ENCODE measurements at regions of chr14 and their contacts with region 1.

Region 1: GRCh38 chr14:89416002-89416995 is 734 bp downstream of the FOXN3 start:
- DNase-seq: peak; percentile 97 to 100 (median 99)
- ATAC-seq: peak; percentile 71
- H3K4me3 ChIP-seq: peak overlapping the region; percentile 85 to 92
- H3K4me3 Mint-ChIP-seq: peak overlapping the region; percentile 94
- H3K27ac ChIP-seq: peak overlapping the region; percentile 75 to 77
- H3K27ac Mint-ChIP-seq: peak overlapping the region; percentile 93
- H3K4me1 ChIP-seq: peaks cover 30% of the 10 kb centered on the region
- H3K4me1 Mint-ChIP-seq: peaks cover 57% of the 10 kb centered on the region
- H3K27me3 ChIP-seq: no peaks in the 10 kb centered on the region
- H3K27me3 Mint-ChIP-seq: no peaks in the 10 kb centered on the region
- CTCF ChIP-seq: no peak

Region 2: DNA sequence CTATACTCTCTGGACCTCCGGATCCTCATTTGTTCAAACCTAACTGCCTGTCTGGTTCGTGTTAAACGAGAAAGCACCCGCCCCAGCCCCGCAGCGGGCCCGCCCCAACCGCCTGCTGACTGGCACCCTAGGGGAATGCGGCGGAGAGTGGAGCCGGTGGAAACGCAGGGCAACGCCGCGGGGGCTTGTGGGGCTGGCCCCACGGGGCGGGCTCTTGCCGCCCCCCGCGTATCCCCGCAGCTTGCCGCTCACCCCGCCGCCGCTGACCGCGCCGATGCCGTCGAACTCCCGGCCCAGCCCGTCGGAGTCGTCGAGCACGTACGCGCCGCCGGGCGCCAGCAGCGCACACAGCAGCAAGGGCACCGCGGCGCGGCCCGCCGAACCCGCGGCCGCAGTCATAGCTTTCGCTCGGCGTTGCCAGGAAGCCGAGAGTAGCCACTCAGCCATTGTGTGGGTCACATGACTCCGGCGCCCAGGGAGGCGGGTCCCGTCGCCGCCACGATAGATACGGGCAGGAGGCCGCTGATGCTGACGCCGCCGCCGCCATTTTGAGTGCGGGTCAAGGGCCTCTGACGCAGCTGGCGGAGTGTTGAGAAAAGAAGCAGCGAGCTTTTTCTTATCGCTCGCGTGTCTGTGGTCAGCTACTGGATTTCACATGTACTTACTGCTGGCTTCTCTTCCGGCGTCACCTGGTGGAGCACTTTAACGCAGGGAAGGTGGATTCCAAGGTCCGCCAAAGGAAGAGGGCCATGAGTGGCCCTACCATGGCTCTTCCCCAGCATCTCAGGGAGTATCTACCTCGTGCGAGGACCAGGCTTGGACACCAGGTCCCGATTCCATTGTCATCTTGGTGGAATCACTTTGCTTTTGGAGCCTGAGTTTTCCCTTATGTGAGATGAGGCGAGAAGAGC is 1423.3 kb before region 1 on chr14 and contains the start of gene GALC:
- CTCF ChIA-PET with region 1: no interaction called
- POLR2A ChIA-PET with region 1: no interaction called
- intact Hi-C with region 1: loop called in 1 of 2 experiments (anchors 10 kb)
- DNase-seq: peak; percentile 91 to 98 (median 95)
- ATAC-seq: peak; percentile 81
- H3K4me3 ChIP-seq: peak within 1 kb of the TSS; percentile 59 to 72
- H3K4me3 Mint-ChIP-seq: peak within 1 kb of the TSS; percentile 90
- H3K27ac ChIP-seq: peak within 1 kb of the TSS; percentile 83 to 96
- H3K27ac Mint-ChIP-seq: peak within 1 kb of the TSS; percentile 98
- H3K4me1 ChIP-seq: peaks cover 42% of the 10 kb centered on the region
- H3K4me1 Mint-ChIP-seq: peaks cover 73% of the 10 kb centered on the region
- H3K27me3 ChIP-seq: no peaks in the 10 kb centered on the region
- H3K27me3 Mint-ChIP-seq: no peaks in the 10 kb centered on the region
- CTCF ChIP-seq: peak; percentile 6
- total RNA-seq, gene GALC: 14.9 to 16.3 TPM

Region 3: GRCh38 chr14:89178802-89179535 is 237.3 kb before region 1 on chr14:
- CTCF ChIA-PET with region 1: no interaction called
- POLR2A ChIA-PET with region 1: no interaction called
- intact Hi-C with region 1: loop called (anchors 1 to 10 kb)
- DNase-seq: no peak
- ATAC-seq: no peak
- H3K4me3 ChIP-seq: no peak overlapping the region
- H3K4me3 Mint-ChIP-seq: no peak overlapping the region
- H3K27ac ChIP-seq: no peak overlapping the region
- H3K27ac Mint-ChIP-seq: peak overlapping the region; percentile 35
- H3K4me1 ChIP-seq: no peaks in the 10 kb centered on the region
- H3K4me1 Mint-ChIP-seq: peaks cover 17% of the 10 kb centered on the region
- H3K27me3 ChIP-seq: no peaks in the 10 kb centered on the region
- H3K27me3 Mint-ChIP-seq: no peaks in the 10 kb centered on the region
- CTCF ChIP-seq: no peak

Region 4: DNA sequence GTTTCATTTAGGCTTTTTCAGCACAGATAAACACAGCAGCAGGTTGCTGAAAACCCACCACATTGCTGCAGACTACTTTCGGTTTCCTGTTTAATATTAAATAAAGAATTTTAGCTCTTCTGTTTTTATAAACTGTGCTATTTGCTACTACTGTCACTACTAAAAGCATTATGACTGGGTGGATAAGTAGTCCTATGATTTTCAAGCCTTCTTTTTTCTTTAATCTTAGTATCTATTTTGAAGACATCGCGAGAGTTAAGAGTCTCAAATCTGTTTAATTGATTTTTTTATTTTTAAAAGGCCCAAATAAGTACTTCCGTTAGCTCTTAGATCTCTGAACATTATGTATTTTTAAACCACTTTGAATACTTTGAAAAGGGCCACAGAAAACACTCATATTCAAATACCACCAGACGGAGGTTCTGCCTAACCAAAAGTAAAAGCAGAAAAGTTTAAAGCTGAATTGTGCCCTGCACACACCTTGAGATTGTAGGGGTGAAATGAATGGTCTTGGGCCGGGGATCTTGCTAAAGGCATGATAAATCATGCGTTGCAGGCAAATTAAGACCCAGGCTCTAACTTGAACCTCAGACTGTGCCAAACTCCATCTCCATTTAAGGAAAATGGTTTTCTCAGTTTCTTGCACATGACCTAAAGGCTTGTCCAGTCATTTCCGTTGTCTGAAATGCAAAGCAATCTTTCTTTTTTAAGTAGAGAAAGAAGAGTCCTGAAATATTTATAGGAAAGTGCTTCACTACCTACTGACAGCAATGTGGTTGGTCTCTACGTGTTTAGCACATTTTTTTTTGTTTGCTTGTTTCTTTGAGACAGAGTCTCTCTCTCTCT is 14.3 kb after region 1 on chr14:
- CTCF ChIA-PET with region 1: interaction called, 5 read pairs
- POLR2A ChIA-PET with region 1: interaction called, 13 read pairs
- intact Hi-C with region 1: loop called (anchors 1 kb)
- DNase-seq: peak in 5 of 9 experiments; percentile 26 to 82 (median 35)
- ATAC-seq: peak; percentile 83
- H3K4me3 ChIP-seq: peak overlapping the region; percentile 43 to 53
- H3K4me3 Mint-ChIP-seq: peak overlapping the region; percentile 73
- H3K27ac ChIP-seq: peak overlapping the region; percentile 48 to 78
- H3K27ac Mint-ChIP-seq: peak overlapping the region; percentile 93
- H3K4me1 ChIP-seq: peaks cover 35% of the 10 kb centered on the region
- H3K4me1 Mint-ChIP-seq: peaks cover 65% of the 10 kb centered on the region
- H3K27me3 ChIP-seq: no peaks in the 10 kb centered on the region
- H3K27me3 Mint-ChIP-seq: no peaks in the 10 kb centered on the region
- CTCF ChIP-seq: no peak

Region 5: GRCh38 chr14:89618811-89619551 is 202.7 kb after region 1 on chr14:
- CTCF ChIA-PET with region 1: no interaction called
- POLR2A ChIA-PET with region 1: no interaction called
- intact Hi-C with region 1: loop called (anchors 1 to 2 kb)
- DNase-seq: peak; percentile 43 to 87 (median 66)
- ATAC-seq: peak; percentile 44
- H3K4me3 ChIP-seq: peak overlapping the region; percentile 64 to 73
- H3K4me3 Mint-ChIP-seq: peak overlapping the region; percentile 97
- H3K27ac ChIP-seq: peak overlapping the region; percentile 89 to 90
- H3K27ac Mint-ChIP-seq: peak overlapping the region; percentile 98
- H3K4me1 ChIP-seq: peaks cover 54% of the 10 kb centered on the region
- H3K4me1 Mint-ChIP-seq: peaks cover 68% of the 10 kb centered on the region
- H3K27me3 ChIP-seq: no peaks in the 10 kb centered on the region
- H3K27me3 Mint-ChIP-seq: no peaks in the 10 kb centered on the region
- CTCF ChIP-seq: no peak

Region 6: GRCh38 chr14:89767861-89768268 is 351.6 kb after region 1 on chr14:
- CTCF ChIA-PET with region 1: interaction called, 4 read pairs
- POLR2A ChIA-PET with region 1: no interaction called
- intact Hi-C with region 1: loop called (anchors 2 kb)
- DNase-seq: peak; percentile 42 to 87 (median 67)
- ATAC-seq: peak; percentile 93
- H3K4me3 ChIP-seq: no peak overlapping the region
- H3K4me3 Mint-ChIP-seq: peak overlapping the region; percentile 67
- H3K27ac ChIP-seq: no peak overlapping the region
- H3K27ac Mint-ChIP-seq: peak overlapping the region; percentile 84
- H3K4me1 ChIP-seq: peaks cover 29% of the 10 kb centered on the region
- H3K4me1 Mint-ChIP-seq: peaks cover 50% of the 10 kb centered on the region
- H3K27me3 ChIP-seq: no peaks in the 10 kb centered on the region
- H3K27me3 Mint-ChIP-seq: no peaks in the 10 kb centered on the region
- CTCF ChIP-seq: peak; percentile 87